GM13976 (cell line): ENCODE measurements at regions of chr1 and their contacts with region 1.

Region 1: DNA sequence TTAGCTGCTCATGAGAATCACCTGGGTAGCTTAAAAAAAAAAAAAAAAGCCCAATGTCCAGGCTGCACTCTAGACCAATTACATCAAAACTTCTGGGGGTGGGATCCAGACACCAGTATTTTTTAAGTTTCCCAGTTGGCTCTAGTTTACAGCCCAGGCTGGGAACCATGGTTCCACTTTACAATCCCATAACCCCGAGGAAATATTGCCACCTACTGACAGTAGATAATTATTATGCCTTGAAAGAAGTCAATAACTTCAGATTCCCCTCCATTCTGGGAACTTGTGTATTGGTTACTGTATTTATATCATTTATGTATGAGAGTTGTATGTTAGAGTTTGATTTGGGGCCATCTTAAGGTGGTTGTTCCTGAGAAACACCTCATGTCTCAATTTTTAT is 100.2 kb downstream of the SPATA46 start:
- DNase-seq: peak; percentile 57
- CTCF ChIP-seq: peak; percentile 56

Region 2: GRCh38 chr1:162056043-162056442 is 220.4 kb before region 1 on chr1:
- in situ Hi-C with region 1: loop called (anchors 10 kb)
- DNase-seq: peak; percentile 59
- CTCF ChIP-seq: peak; percentile 71

Region 3: DNA sequence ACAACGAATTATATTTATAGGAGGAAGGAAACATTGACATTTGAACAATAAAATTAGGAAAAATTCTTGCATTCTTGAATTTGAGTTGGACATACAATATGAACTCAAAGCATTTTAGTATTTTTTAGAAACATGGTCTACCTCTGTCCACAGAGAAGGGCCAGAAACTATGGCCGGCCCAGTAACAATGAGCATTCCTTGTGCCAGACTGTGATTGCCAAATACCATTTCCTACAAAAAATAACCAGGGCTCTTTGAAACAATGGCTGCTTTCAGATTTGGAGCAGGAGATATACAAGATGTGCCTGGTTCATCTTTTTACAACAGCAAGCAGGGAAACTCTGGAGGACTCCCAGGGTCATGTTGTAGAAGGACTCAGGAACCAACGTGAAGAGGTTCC is 168.6 kb before region 1 on chr1:
- in situ Hi-C with region 1: no loop called
- DNase-seq: no peak
- CTCF ChIP-seq: no peak

Region 4: GRCh38 chr1:162391790-162392563 is 115.5 kb after region 1 on chr1:
- in situ Hi-C with region 1: no loop called
- DNase-seq: peak; percentile 60
- CTCF ChIP-seq: peak; percentile 69

Region 5: GRCh38 chr1:162878000-162878596 is 601.6 kb after region 1 on chr1:
- in situ Hi-C with region 1: no loop called
- DNase-seq: peak; percentile 17
- CTCF ChIP-seq: peak; percentile 57